PC-3 (cell line): ENCODE measurements at regions of chrX and their contacts with region 1.

Region 1: GRCh38 chrX:73855546-73855945 is 292.5 kb downstream of the CHIC1 start:
- DNase-seq: peak; percentile 78
- ATAC-seq: peak; percentile 65
- H3K4me3 ChIP-seq: no peak overlapping the region
- H3K27ac ChIP-seq: no peak overlapping the region
- H3K4me1 ChIP-seq: no peaks in the 10 kb centered on the region
- H3K27me3 ChIP-seq: no peaks in the 10 kb centered on the region
- CTCF ChIP-seq: peak; percentile 83

Region 2: GRCh38 chrX:73943693-73944562 is 88.4 kb after region 1 on chrX:
- CTCF ChIA-PET with region 1: no interaction called
- POLR2A ChIA-PET with region 1: no interaction called
- intact Hi-C with region 1: loop called (anchors 1 kb)
- DNase-seq: peak; percentile 89
- ATAC-seq: peak; percentile 96
- H3K4me3 ChIP-seq: peak overlapping the region; percentile 92
- H3K27ac ChIP-seq: peak overlapping the region; percentile 68
- H3K4me1 ChIP-seq: peaks cover 10% of the 10 kb centered on the region
- H3K27me3 ChIP-seq: no peaks in the 10 kb centered on the region
- CTCF ChIP-seq: no peak

Region 3: GRCh38 chrX:74015379-74016019 is 160.0 kb after region 1 on chrX:
- CTCF ChIA-PET with region 1: no interaction called
- POLR2A ChIA-PET with region 1: interaction called, 3 read pairs
- intact Hi-C with region 1: loop called (anchors 1 kb)
- DNase-seq: peak; percentile 80
- ATAC-seq: peak; percentile 85
- H3K4me3 ChIP-seq: no peak overlapping the region
- H3K27ac ChIP-seq: no peak overlapping the region
- H3K4me1 ChIP-seq: 0 out of 2 replicates have a peak, but pooled peaks cover 3% of the 10 kb centered on the region
- H3K27me3 ChIP-seq: no peaks in the 10 kb centered on the region
- CTCF ChIP-seq: peak; percentile 90

Region 4: GRCh38 chrX:74133156-74133796 is 277.7 kb after region 1 on chrX:
- CTCF ChIA-PET with region 1: no interaction called
- POLR2A ChIA-PET with region 1: no interaction called
- intact Hi-C with region 1: loop called (anchors 1 kb)
- DNase-seq: peak; percentile 76
- ATAC-seq: peak; percentile 76
- H3K4me3 ChIP-seq: no peak overlapping the region
- H3K27ac ChIP-seq: no peak overlapping the region
- H3K4me1 ChIP-seq: no peaks in the 10 kb centered on the region
- H3K27me3 ChIP-seq: no peaks in the 10 kb centered on the region
- CTCF ChIP-seq: peak; percentile 73

Region 5: GRCh38 chrX:74458735-74459134 is 603.2 kb after region 1 on chrX:
- CTCF ChIA-PET with region 1: no interaction called
- POLR2A ChIA-PET with region 1: no interaction called
- intact Hi-C with region 1: loop called (anchors 5 kb)
- DNase-seq: peak; percentile 93
- ATAC-seq: peak; percentile 94
- H3K4me3 ChIP-seq: no peak overlapping the region
- H3K27ac ChIP-seq: no peak overlapping the region
- H3K4me1 ChIP-seq: peaks cover 10% of the 10 kb centered on the region; the same call in 1 of the 2 replicates
- H3K27me3 ChIP-seq: no peaks in the 10 kb centered on the region
- CTCF ChIP-seq: peak; percentile 61